Aorta (tissue), 5 donors: ENCODE measurements at regions of chr4 and their contacts with region 1.

Region 1: DNA sequence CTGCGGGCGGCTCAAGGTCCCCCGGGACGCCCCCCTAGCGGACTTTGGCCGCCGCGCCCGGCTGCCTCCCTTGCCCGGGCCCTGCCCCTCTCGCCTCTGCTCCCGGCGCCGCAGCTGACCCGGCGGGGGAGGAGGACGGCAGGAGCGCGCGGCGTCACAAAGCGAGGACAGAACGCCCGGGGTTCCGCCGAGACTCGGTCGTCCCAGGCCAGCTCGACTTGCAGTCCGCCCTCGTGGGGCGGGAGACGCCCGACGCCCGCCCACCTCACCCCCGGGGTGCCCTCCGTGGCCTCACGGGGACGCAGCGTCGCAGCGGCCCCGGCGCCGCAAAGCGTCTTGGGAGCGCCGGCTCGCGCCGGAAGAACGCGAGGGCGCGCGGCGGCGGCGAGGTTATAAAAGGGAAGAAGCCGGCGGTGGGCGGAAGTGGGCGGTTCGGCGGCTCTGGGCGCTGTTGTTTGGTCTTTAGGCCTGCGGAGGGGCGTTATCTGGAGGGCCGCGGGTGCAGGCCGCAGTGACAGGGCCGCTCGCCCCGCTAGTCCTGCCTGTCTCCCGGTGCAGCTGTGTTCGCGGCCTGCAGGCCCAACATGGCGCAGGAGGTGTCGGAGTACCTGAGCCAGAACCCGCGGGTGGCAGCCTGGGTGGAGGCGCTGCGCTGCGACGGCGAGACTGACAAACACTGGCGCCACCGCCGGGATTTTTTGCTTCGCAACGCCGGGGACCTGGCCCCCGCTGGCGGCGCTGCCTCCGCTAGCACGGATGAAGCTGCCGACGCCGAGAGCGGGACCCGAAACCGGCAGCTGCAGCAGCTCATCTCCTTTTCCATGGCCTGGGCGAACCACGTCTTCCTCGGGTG is at the start of gene CDKN2AIP:
- DNase-seq: peak; percentile 96 to 98
- ATAC-seq: peak; percentile 98
- H3K4me3 ChIP-seq: peak within 1 kb of the TSS; percentile 78 to 87
- H3K27ac ChIP-seq: peak within 1 kb of the TSS; percentile 91 to 93
- H3K4me1 ChIP-seq: no peaks in the 10 kb centered on the region
- H3K27me3 ChIP-seq: no peaks in the 10 kb centered on the region
- total RNA-seq, gene CDKN2AIP: 12.0 to 15.4 TPM

Region 2: GRCh38 chr4:183098723-183099536 is 345.5 kb before region 1 on chr4 and contains the start of gene WWC2:
- intact Hi-C with region 1: loop called in 1 of 2 experiments (anchors 10 kb)
- DNase-seq: peak; percentile 95 to 96
- ATAC-seq: peak; percentile 95
- H3K4me3 ChIP-seq: peak within 1 kb of the TSS; percentile 79 to 96
- H3K27ac ChIP-seq: peak within 1 kb of the TSS; percentile 95 to 96
- H3K4me1 ChIP-seq: peaks cover 0 to 1% of the 10 kb centered on the region in 2 donors
- H3K27me3 ChIP-seq: no peaks in the 10 kb centered on the region
- total RNA-seq, gene WWC2: 42.8 to 50.3 TPM

Region 3: DNA sequence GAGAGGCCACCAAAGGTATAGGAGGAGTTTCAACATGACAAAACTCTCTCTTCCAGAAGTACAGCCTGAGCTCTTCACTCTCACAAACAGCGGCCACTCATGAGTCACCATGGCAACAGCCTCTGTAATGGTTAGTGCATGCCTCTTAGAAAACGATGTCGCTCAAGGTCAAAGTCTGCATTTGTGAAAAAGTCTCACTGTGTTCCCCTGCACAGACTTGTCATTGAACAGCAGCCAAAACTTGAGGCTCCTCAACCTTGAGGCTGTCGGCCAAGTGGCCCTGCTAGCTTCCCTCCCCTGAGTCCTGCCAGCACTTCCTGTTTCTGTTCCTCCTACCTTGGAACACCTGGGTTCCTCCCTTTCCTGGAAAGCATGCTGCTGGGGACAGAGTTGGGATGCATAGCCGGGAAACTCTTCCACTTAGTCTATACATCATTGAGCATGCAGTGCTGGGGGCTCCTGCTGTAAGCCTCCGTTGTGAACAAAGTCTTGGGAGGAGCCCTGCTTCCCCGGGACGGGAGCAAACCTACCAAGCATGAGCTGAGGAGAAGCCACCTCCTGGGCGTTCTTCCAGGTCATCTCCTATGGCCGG is 127.0 kb after region 1 on chr4:
- intact Hi-C with region 1: no loop called
- DNase-seq: no peak
- ATAC-seq: no peak
- H3K4me3 ChIP-seq: no peak overlapping the region
- H3K27ac ChIP-seq: no peak overlapping the region
- H3K4me1 ChIP-seq: no peaks in the 10 kb centered on the region
- H3K27me3 ChIP-seq: no peaks in the 10 kb centered on the region